ENCODE measurements at regions of chr6 and their contacts with region 1.

Region 1: DNA sequence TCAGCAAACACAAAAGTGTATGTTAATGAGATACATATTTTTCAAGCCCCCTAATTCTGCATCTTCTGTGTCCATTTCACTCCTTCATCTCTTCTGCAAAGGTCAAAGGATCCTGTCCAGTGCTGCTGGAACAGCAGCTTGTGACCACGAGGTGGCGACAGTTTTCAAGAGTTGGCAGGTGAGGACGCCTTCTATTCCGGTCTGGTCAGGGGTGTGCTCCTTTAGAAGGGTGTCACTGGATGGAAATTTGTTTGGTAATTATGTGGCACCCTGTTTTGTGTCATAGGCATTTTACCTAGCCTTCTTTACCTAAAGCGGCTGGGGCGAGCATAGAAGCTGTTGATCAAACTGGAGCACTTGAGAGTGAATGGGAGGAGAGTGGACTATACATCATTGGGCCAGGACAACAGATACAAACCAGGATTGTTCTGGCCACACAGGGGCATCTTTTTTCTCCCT is 32.9 kb upstream of the ERVFRD-1 start:
- DNase-seq: peak; percentile 79 to 83 (median 82)
- ATAC-seq: peak; percentile 93 to 96 (median 94)
- H3K4me3 ChIP-seq: no peak overlapping the region
- H3K27ac ChIP-seq: no peak overlapping the region
- H3K4me1 ChIP-seq: peaks cover 0 to 3% (median 0%) of the 10 kb centered on the region in 4 donors
- H3K27me3 ChIP-seq: no peaks in the 10 kb centered on the region
- CTCF ChIP-seq: peak; percentile 91 to 95 (median 93)
- POLR2A ChIP-seq: no peak

Region 2: DNA sequence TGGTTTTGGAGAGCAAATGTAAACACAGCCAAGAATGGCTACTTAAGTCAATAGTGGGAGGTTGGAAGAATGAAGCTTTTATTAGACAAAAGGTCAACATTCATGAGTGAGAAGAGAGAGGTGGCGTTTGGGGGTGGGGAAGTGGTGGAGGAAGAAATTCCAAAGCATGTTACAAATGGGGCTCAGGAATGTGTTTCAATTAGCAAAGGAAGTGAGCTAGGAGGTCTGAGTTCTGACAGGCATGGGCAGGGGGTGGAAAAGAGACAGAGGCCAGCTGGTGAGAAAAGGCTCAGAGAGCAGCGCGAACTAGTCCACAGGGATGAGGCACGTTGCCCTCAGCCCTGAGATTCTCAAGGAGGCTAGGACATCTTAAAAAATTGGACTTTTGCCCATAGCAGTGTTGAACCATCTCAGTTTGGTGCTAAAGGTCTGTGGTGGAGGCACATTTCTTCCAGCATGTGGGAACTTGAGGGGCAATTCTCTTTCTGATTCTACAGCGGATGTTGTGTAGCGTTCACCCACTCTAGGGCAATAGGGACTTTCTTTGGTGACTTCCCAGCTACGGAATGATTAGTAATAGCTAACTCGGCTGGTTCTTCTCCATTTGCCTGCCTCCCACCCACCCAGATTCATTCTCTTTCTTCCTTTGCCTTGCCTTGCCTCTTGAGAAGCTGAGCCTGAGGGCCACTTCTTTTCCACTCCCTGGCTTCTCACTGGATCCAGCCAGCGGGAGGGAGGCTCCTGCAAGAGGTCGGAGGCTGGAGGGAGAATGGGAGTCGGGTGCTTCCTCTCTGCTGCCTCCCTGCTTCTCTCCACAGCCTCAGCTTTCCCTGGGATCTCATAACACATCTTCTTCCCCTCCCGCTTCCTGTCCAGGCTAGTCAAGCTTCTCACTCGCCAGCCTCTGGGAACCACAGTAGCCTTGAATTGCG is 133.1 kb after region 1 on chr6:
- intact Hi-C with region 1: no loop called
- DNase-seq: no peak
- ATAC-seq: peak in 2 of 4 donors; percentile 12 to 19
- H3K4me3 ChIP-seq: no peak overlapping the region
- H3K27ac ChIP-seq: no peak overlapping the region
- H3K4me1 ChIP-seq: peaks cover 0 to 12% (median 0%) of the 10 kb centered on the region in 4 donors
- H3K27me3 ChIP-seq: no peaks in the 10 kb centered on the region
- CTCF ChIP-seq: no peak
- POLR2A ChIP-seq: no peak

Region 3: GRCh38 chr6:11353921-11354389 is 209.5 kb after region 1 on chr6:
- intact Hi-C with region 1: no loop called
- DNase-seq: no peak
- ATAC-seq: peak in 2 of 4 donors; percentile 29 to 35
- H3K4me3 ChIP-seq: no peak overlapping the region
- H3K27ac ChIP-seq: peak overlapping the region in 1 of 3 donors; percentile 5
- H3K4me1 ChIP-seq: peaks cover 0 to 5% (median 0%) of the 10 kb centered on the region in 4 donors
- H3K27me3 ChIP-seq: no peaks in the 10 kb centered on the region
- CTCF ChIP-seq: no peak
- POLR2A ChIP-seq: no peak

Region 4: GRCh38 chr6:11496152-11497060 is 352.0 kb after region 1 on chr6:
- intact Hi-C with region 1: loop called in 1 of 2 experiments (anchors 5 kb)
- DNase-seq: peak in 1 of 3 donors; percentile 74
- ATAC-seq: peak; percentile 96 to 98 (median 97)
- H3K4me3 ChIP-seq: no peak overlapping the region
- H3K27ac ChIP-seq: no peak overlapping the region
- H3K4me1 ChIP-seq: peaks cover 0 to 4% (median 0%) of the 10 kb centered on the region in 4 donors
- H3K27me3 ChIP-seq: no peaks in the 10 kb centered on the region
- CTCF ChIP-seq: peak; percentile 88 to 99 (median 92)
- POLR2A ChIP-seq: no peak

Measured in right lobe of liver (tissue), 6 donors.